ENCODE measurements at regions of chr9 and their contacts with region 1.

Region 1: GRCh38 chr9:124040935-124041816 is 29.6 kb downstream of the LHX2 start:
- DNase-seq: peak; percentile 88
- CTCF ChIP-seq: peak; percentile 86

Region 2: DNA sequence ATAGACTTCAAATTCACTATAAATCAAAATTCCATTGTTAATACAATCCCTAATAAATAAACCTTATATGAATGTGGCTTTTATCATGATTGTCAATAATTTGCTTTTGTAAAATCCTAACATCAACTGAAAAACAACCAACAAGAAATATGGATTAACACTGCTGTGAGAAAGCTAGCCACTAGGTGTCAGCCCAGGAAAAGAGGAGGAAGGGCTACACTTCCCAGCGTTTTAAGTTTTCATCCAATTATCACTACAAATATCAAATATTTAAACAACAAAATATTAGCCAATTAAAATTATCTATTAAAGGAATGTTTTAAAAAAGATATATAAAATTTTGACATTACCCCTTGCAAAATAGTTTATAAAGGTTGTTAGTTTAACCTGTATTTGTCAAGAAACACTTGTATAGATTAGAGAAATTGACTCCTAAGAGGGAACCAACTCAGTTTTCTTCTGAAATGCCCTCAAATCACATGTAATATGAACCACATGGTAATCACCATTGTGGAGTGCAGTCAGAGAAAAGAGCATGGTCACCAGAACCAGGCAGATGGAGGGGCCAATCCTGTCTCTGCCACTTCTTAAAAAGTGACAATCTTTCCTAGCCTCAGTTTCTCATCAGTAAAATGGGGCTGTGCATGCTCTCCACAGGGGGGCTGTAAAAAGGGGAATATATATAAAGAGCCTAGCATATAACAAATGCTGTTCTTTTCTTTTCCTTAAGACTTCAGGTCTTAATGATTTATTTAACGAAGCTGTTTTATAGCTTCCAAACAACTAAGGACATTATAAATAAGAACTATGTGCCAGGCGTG is 497.0 kb before region 1 on chr9:
- CTCF ChIA-PET with region 1: interaction called, 73 read pairs
- POLR2A ChIA-PET with region 1: no interaction called
- DNase-seq: peak; percentile 50
- CTCF ChIP-seq: peak; percentile 82

Region 3: GRCh38 chr9:123912167-123912897 is 128.8 kb before region 1 on chr9:
- CTCF ChIA-PET with region 1: no interaction called
- POLR2A ChIA-PET with region 1: no interaction called
- DNase-seq: no peak
- CTCF ChIP-seq: no peak

Region 4: DNA sequence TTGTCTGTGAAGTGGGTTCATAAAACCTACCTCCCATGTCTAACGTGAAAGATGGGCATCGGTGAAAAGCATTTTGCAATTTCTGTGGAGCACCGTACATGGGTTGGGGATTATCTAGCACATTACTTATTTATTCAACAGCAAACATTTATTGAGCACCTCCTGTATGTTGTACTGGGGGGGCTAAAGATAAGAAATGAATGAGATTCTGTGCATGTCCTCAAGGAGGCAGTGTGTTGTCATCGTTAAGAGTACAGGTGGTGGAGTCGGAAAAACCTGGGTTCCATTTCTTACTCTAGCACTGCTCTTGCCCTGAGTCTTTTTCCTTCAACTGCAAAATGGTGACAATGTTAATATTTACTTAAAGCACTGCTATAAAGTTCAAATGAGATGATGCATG is 80.8 kb before region 1 on chr9:
- CTCF ChIA-PET with region 1: interaction called, 28 read pairs
- POLR2A ChIA-PET with region 1: no interaction called
- DNase-seq: no peak
- CTCF ChIP-seq: peak; percentile 27

Region 5: DNA sequence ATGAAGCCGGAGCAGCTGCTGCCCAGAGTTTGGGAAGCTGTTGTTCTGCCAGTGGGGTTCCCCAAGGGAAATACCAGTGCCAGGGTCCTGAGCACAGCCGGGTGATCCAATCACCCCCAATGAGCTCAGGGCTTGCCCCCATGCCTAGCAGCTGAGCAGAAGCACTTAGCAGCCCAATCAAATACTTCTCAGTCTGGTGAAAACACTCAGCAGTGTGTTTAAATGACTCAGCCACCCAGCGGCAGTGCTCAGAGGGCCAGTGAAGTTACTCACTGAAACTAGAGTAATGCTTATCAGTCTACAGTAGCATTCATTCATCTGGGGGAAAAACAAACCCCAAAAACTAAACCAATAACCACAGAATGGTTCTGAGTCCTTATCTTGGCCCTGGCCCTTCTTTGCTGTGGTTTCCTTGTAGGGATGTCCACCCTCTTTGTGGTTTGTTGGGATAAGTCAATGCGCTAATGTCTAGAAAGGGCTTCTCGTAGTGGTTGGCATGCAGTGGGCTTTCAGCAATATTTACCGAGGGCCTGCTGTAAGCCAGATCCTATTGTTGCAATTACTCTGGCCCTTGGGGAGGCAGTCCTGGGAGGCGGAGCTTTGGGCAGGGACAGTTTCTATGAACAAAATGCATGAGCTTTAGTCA is 13.5 kb after region 1 on chr9:
- CTCF ChIA-PET with region 1: interaction called, 80 read pairs
- POLR2A ChIA-PET with region 1: no interaction called
- DNase-seq: peak; percentile 71
- CTCF ChIP-seq: no peak

Region 6: DNA sequence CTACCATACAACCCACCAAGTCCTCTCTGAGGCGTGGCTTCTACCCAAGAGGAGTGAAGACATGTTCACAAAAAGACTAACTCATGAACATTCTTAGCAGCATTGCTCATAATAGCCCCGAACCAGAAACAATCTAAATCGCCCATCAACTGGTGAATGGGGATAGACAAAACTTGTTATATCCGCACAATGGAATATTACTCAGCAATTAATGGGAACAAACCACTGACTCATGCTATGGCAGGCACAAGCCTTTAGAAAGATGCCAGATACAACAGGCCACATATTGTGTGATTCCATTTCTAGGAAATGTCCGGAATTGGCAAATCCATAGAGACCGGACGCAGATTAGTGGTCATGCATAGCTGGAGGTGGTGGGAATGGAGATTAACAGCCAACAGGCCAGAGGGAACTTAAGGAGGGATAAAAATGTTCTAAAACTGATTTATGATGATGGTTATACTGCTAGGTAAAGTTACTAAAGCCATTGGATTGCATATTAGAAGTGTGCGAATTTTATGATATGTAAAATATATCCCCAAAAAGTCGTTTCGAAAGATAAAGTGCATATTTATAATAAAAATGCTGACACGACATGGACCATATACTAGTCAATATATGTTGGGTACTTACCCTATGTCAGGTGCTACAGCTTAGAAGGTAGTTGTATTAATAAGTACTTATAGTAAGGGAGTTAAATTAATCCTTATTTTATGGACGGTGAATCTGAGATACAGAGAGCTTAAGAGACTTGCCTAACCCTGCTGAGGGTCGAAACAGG is 25.8 kb after region 1 on chr9:
- CTCF ChIA-PET with region 1: no interaction called
- POLR2A ChIA-PET with region 1: no interaction called
- DNase-seq: no peak
- CTCF ChIP-seq: no peak